ENCODE measurements at regions of chr16 and their contacts with region 1.

Region 1: GRCh38 chr16:20849587-20850390 is 43.5 kb downstream of the REXO5 start:
- DNase-seq: peak; percentile 68
- ATAC-seq: peak; percentile 57
- H3K4me3 ChIP-seq: no peak overlapping the region
- H3K27ac ChIP-seq: no peak overlapping the region
- H3K4me1 ChIP-seq: peaks cover 19% of the 10 kb centered on the region
- H3K27me3 ChIP-seq: no peaks in the 10 kb centered on the region
- CTCF ChIP-seq: peak; percentile 98
- EP300 ChIP-seq: no peak
- POLR2A ChIP-seq: no peak
- RAD21 ChIP-seq: peak; percentile 97

Region 2: DNA sequence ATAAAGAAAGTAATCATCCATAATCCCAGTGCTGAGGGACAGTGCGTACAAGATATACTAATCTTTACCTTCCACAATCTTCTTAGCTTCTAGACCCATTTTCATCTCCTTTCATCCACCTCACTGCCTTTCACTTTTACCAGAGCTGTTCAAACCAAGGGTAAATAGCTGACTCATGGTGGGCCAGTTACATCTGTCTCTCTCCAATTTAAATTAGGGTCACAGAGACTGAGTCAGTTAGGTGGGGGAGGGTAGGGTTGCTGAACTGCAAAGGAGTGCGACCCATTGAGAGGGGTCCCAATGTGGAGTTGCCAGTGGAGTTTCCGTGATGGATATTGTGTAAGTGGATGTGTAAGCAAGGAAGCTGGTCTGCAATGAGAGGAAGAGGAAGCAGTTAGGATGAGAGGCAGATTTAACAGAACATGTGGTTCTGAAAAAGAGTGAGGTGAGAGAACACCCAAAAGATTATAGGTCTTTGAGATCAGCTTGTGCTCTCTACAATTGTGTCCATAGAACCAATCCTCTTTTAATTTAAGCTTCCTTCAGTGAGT is 606.0 kb before region 1 on chr16:
- CTCF ChIA-PET with region 1: no interaction called
- POLR2A ChIA-PET with region 1: no interaction called
- in situ Hi-C with region 1: no loop called
- intact Hi-C with region 1: no loop called
- DNase-seq: no peak
- ATAC-seq: no peak
- H3K4me3 ChIP-seq: no peak overlapping the region
- H3K27ac ChIP-seq: no peak overlapping the region
- H3K4me1 ChIP-seq: no peaks in the 10 kb centered on the region
- H3K27me3 ChIP-seq: no peaks in the 10 kb centered on the region; a peak in 1 of 5 replicates
- CTCF ChIP-seq: no peak
- EP300 ChIP-seq: no peak
- POLR2A ChIP-seq: no peak
- RAD21 ChIP-seq: no peak

Region 3: DNA sequence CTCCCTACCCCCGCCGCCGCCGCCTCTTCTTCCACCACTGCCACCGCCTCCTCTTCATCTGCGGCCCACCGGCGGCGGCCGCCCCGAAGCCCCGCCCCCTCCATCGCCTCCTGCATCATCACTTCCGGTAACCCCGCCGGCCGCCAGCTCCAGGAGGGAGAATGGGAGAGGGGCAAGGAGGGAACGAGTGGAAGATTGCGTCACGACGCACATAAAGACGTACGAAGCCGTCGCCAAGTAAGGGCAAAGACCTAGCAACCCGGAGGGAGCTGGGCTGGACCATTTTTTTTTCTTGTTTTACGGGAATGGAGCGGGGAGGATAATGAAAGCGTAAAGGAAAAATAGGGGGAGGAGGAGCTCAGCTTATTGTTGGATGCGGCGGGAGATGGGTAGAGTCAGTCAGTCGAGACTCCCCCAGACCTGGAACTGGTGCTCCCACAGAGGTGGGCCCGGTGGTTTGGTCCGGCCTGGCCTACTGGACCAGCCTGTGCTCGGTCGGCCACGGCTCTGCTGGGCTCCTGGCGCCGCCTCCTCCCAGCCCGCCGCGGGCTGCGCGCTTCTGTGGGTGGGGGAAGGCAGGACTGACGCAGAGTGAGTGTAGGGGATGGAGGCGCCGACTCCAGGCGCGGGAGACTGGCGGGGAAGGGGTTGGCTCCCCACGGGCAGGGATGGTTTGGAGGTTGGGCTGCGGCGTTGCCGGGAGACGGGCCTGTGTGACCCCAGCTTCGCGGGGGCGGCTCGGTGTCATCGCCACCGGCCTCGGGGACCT is 50.7 kb after region 1 on chr16 and contains the starts of genes DCUN1D3 and LYRM1:
- CTCF ChIA-PET with region 1: no interaction called
- POLR2A ChIA-PET with region 1: interaction called, 9 read pairs
- in situ Hi-C with region 1: no loop called
- intact Hi-C with region 1: loop called (anchors 1 kb)
- DNase-seq: peak; percentile 99
- ATAC-seq: peak; percentile 92
- H3K4me3 ChIP-seq: peak within 1 kb of the TSS; percentile 83 to 95 (median 87)
- H3K27ac ChIP-seq: peak within 1 kb of the TSS; percentile 94
- H3K4me1 ChIP-seq: peaks cover 76% of the 10 kb centered on the region
- H3K27me3 ChIP-seq: no peaks in the 10 kb centered on the region; a peak in 1 of 5 replicates
- CTCF ChIP-seq: peak; percentile 14
- EP300 ChIP-seq: peak; percentile 48 to 69; a peak in 3 of 4 replicates
- POLR2A ChIP-seq: peak; percentile 70 to 88; a peak in 3 of 4 replicates
- RAD21 ChIP-seq: peak; percentile 40
- total RNA-seq, gene DCUN1D3: 19.3 and 26.1 TPM in 2 replicates
- total RNA-seq, gene LYRM1: 82.6 and 106 TPM in 2 replicates

Region 4: DNA sequence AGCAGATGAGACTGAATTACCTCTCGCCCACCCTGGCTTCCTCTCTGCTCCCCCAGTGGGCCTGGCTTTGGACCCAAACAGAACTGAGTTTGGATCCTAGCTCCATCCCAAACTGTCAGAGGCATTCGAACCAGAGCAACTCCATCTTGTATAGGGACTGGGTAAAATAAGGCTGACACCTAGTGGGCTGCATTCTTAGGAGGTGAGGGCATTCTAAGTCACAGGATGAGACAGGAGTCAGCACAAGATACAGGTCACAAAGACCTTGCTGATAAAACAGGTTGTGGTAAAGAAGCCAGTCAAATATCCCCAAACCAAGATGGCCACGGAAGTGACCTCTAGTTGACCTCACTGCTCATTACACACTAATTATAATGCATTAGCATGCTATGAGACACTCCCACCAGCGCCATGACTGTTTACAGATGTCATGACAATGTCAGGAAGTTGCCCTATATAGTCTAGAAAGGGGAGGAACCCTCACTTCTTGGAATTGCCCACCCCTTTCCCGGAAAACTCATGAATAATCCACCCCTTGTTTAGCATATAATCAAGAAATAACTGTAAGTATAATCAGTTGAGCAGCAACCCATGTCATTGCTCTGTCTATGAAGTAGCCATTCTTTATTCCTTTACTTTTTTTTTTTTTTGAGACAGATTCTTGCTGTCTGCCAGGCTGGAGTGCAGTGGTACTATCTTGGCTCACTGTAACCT is 95.2 kb after region 1 on chr16:
- CTCF ChIA-PET with region 1: interaction called, 9 read pairs
- POLR2A ChIA-PET with region 1: no interaction called
- in situ Hi-C with region 1: no loop called
- intact Hi-C with region 1: loop called (anchors 2 kb)
- DNase-seq: peak; percentile 35
- ATAC-seq: peak; percentile 40; the same call in 2 of the 3 replicates
- H3K4me3 ChIP-seq: no peak overlapping the region
- H3K27ac ChIP-seq: no peak overlapping the region
- H3K4me1 ChIP-seq: no peaks in the 10 kb centered on the region
- H3K27me3 ChIP-seq: peaks cover under 1 to 3% of the 10 kb centered on the region in 2 experiments; a peak in 2 of 5 replicates
- CTCF ChIP-seq: peak; percentile 65
- EP300 ChIP-seq: no peak
- POLR2A ChIP-seq: no peak
- RAD21 ChIP-seq: no peak

Region 5: GRCh38 chr16:21083729-21084268 is 234.0 kb after region 1 on chr16:
- CTCF ChIA-PET with region 1: interaction called, 56 read pairs
- POLR2A ChIA-PET with region 1: no interaction called
- in situ Hi-C with region 1: loop called (anchors 5 kb)
- intact Hi-C with region 1: loop called (anchors 1 kb)
- DNase-seq: peak; percentile 64
- ATAC-seq: peak; percentile 93
- H3K4me3 ChIP-seq: no peak overlapping the region
- H3K27ac ChIP-seq: no peak overlapping the region
- H3K4me1 ChIP-seq: peaks cover 8% of the 10 kb centered on the region; the same call in 1 of the 2 replicates
- H3K27me3 ChIP-seq: no peaks in the 10 kb centered on the region
- CTCF ChIP-seq: peak; percentile 96
- EP300 ChIP-seq: no peak
- POLR2A ChIP-seq: no peak
- RAD21 ChIP-seq: peak; percentile 93

Measured in HepG2 (cell line).